HCT116 (cell line): ENCODE measurements at regions of chr19 and their contacts with region 1.

Region 1: DNA sequence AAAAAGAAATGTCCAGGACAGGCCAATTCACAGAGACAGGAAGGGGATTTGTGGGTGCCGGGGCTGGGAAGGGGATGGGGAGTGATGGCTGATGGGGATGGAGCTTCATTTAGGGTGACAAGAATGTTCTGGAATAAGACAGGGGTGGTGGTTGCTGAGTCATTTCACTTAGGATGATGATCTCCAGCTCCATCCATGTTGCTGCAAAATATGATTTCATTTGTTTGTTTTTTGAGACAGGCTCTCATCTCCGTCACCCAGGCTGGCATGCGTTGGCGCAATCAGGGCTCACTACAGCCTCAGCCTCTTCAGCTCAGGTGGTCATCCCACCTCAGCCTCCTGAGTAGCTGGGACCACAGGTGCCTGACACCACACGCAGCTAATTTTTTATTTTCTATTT is 3.1 kb upstream of the JSRP1 start:
- DNase-seq: no peak
- ATAC-seq: no peak
- H3K4me3 ChIP-seq: no peak overlapping the region
- H3K27ac ChIP-seq: no peak overlapping the region
- H3K4me1 ChIP-seq: peaks cover 6% of the 10 kb centered on the region in 2 experiments; a peak in 3 of 4 replicates
- H3K27me3 ChIP-seq: no peaks in the 10 kb centered on the region
- CTCF ChIP-seq: no peak
- POLR2A ChIP-seq: no peak
- RAD21 ChIP-seq: no peak

Region 2: GRCh38 chr19:1998712-1999708 is 260.3 kb before region 1 on chr19:
- CTCF ChIA-PET with region 1: no interaction called
- POLR2A ChIA-PET with region 1: no interaction called
- RAD21 ChIA-PET with region 1: no interaction called
- intact Hi-C with region 1: no loop called
- DNase-seq: no peak
- ATAC-seq: peak; percentile 15; the same call in 1 of the 2 replicates
- H3K4me3 ChIP-seq: no peak overlapping the region
- H3K27ac ChIP-seq: no peak overlapping the region
- H3K4me1 ChIP-seq: no peaks in the 10 kb centered on the region
- H3K27me3 ChIP-seq: no peaks in the 10 kb centered on the region
- CTCF ChIP-seq: no peak
- POLR2A ChIP-seq: no peak
- RAD21 ChIP-seq: no peak

Region 3: GRCh38 chr19:2145831-2146241 is 113.5 kb before region 1 on chr19:
- CTCF ChIA-PET with region 1: no interaction called
- POLR2A ChIA-PET with region 1: no interaction called
- RAD21 ChIA-PET with region 1: no interaction called
- intact Hi-C with region 1: no loop called
- DNase-seq: no peak
- ATAC-seq: no peak
- H3K4me3 ChIP-seq: no peak overlapping the region
- H3K27ac ChIP-seq: peak overlapping the region; percentile 18; the same call in 1 of the 2 replicates
- H3K4me1 ChIP-seq: peaks cover 11 to 12% of the 10 kb centered on the region in 2 experiments; a peak in 3 of 4 replicates
- H3K27me3 ChIP-seq: no peaks in the 10 kb centered on the region
- CTCF ChIP-seq: no peak
- POLR2A ChIP-seq: no peak
- RAD21 ChIP-seq: no peak

Region 4: GRCh38 chr19:2243274-2244124 is 15.8 kb before region 1 on chr19:
- CTCF ChIA-PET with region 1: interaction called, 7 read pairs
- POLR2A ChIA-PET with region 1: no interaction called
- RAD21 ChIA-PET with region 1: no interaction called
- intact Hi-C with region 1: loop called (anchors 2 kb)
- DNase-seq: no peak
- ATAC-seq: no peak
- H3K4me3 ChIP-seq: no peak overlapping the region
- H3K27ac ChIP-seq: no peak overlapping the region; the same call in 1 of the 2 replicates
- H3K4me1 ChIP-seq: peaks cover 6 to 26% of the 10 kb centered on the region in 2 experiments; a peak in 3 of 4 replicates
- H3K27me3 ChIP-seq: no peaks in the 10 kb centered on the region
- CTCF ChIP-seq: no peak
- POLR2A ChIP-seq: no peak
- RAD21 ChIP-seq: no peak

Region 5: GRCh38 chr19:2282062-2282861 is 22.9 kb after region 1 on chr19 and contains the start of gene PEAK3:
- CTCF ChIA-PET with region 1: no interaction called
- POLR2A ChIA-PET with region 1: no interaction called
- RAD21 ChIA-PET with region 1: no interaction called
- intact Hi-C with region 1: no loop called
- DNase-seq: no peak
- ATAC-seq: no peak
- H3K4me3 ChIP-seq: no peak within 1 kb of the TSS
- H3K27ac ChIP-seq: no peak within 1 kb of the TSS
- H3K4me1 ChIP-seq: no peaks in the 10 kb centered on the region
- H3K27me3 ChIP-seq: no peaks in the 10 kb centered on the region
- CTCF ChIP-seq: no peak
- POLR2A ChIP-seq: no peak
- RAD21 ChIP-seq: no peak
- total RNA-seq, gene PEAK3: not detected

Region 6: GRCh38 chr19:2320049-2320448 is 60.7 kb after region 1 on chr19:
- CTCF ChIA-PET with region 1: no interaction called
- POLR2A ChIA-PET with region 1: no interaction called
- RAD21 ChIA-PET with region 1: no interaction called
- intact Hi-C with region 1: no loop called
- DNase-seq: no peak
- ATAC-seq: no peak
- H3K4me3 ChIP-seq: no peak overlapping the region
- H3K27ac ChIP-seq: no peak overlapping the region
- H3K4me1 ChIP-seq: no peaks in the 10 kb centered on the region
- H3K27me3 ChIP-seq: no peaks in the 10 kb centered on the region
- CTCF ChIP-seq: no peak
- POLR2A ChIP-seq: no peak
- RAD21 ChIP-seq: no peak